ENCODE measurements at regions of chr18 and their contacts with region 1.

Region 1: DNA sequence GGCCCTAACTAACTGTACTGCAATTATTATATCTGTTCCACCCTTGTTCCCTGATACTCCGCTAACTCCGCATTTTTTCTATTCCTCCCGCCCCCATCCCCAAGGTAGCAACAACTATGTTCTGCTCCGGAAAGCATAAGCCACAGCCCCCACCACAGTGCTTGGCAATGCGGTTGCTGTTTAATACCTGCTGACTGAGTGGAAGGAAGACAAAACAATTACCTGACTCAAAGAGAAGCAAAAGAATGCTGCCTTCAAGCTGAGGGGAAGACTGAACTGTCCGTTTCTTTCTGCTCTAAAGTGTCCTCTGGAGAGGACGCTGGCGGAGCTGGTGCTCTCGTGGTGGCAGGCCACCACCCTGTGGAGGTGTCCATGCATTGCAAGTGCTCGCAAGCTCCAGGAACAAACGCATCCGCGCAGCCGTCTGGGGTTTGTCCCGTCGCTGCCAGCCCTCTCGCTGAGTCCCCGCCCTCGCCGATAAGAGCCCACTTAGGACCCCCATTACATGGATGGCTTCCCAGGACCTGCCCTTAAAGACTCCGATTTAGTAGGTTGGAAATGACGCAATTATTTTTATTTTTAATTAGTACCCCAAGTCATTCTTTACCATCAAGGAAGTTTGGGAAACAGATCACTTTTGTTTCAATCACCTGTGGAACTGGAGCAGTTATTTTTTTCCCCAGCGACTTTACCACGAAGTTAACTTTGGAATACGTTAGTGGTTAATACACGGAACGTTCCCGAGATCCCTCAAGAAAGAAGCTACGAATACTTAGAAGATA is 1.6 kb upstream of the MYL12A start:
- DNase-seq: peak; percentile 56 to 79 (median 72)
- ATAC-seq: peak; percentile 78
- H3K4me3 ChIP-seq: peak overlapping the region; percentile 97
- H3K4me3 Mint-ChIP-seq: peak overlapping the region; percentile 87 to 99 (median 97)
- H3K27ac ChIP-seq: peak overlapping the region; percentile 80
- H3K27ac Mint-ChIP-seq: peak overlapping the region; percentile 77 to 99 (median 97)
- H3K4me1 ChIP-seq: peaks cover 12 to 18% of the 10 kb centered on the region in 2 donors
- H3K4me1 Mint-ChIP-seq: peaks cover 19 to 34% (median 32%) of the 10 kb centered on the region in 7 donors
- H3K27me3 ChIP-seq: no peaks in the 10 kb centered on the region
- H3K27me3 Mint-ChIP-seq: peaks cover 0 to 2% (median 0%) of the 10 kb centered on the region in 5 donors

Region 2: GRCh38 chr18:2636126-2636631 is 609.9 kb before region 1 on chr18:
- CTCF ChIA-PET with region 1: no interaction called
- POLR2A ChIA-PET with region 1: no interaction called
- intact Hi-C with region 1: loop called in 1 of 2 experiments (anchors 5 kb)
- DNase-seq: no peak
- ATAC-seq: peak; percentile 47
- H3K4me3 ChIP-seq: peak overlapping the region; percentile 46
- H3K4me3 Mint-ChIP-seq: peak overlapping the region in 9 of 10 donors; percentile 68 to 93 (median 86)
- H3K27ac ChIP-seq: peak overlapping the region; percentile 83
- H3K27ac Mint-ChIP-seq: peak overlapping the region in 6 of 9 donors; percentile 98 to 100 (median 100)
- H3K4me1 ChIP-seq: peaks cover 65 to 74% of the 10 kb centered on the region in 2 donors
- H3K4me1 Mint-ChIP-seq: peaks cover 0 to 100% (median 79%) of the 10 kb centered on the region in 7 donors
- H3K27me3 ChIP-seq: no peaks in the 10 kb centered on the region
- H3K27me3 Mint-ChIP-seq: no peaks in the 10 kb centered on the region

Region 3: GRCh38 chr18:2958819-2959298 is 287.2 kb before region 1 on chr18:
- CTCF ChIA-PET with region 1: interaction called, 3 read pairs
- POLR2A ChIA-PET with region 1: interaction called, 26 read pairs
- intact Hi-C with region 1: loop called (anchors 1 kb)
- DNase-seq: peak in 1 of 9 donors; percentile 61
- ATAC-seq: no peak
- H3K4me3 ChIP-seq: peak overlapping the region; percentile 8
- H3K4me3 Mint-ChIP-seq: peak overlapping the region; percentile 1 to 85 (median 66)
- H3K27ac ChIP-seq: peak overlapping the region; percentile 68
- H3K27ac Mint-ChIP-seq: peak overlapping the region; percentile 96 to 100 (median 99)
- H3K4me1 ChIP-seq: peaks cover 83 to 85% of the 10 kb centered on the region in 2 donors
- H3K4me1 Mint-ChIP-seq: peaks cover 46 to 97% (median 93%) of the 10 kb centered on the region in 7 donors
- H3K27me3 ChIP-seq: no peaks in the 10 kb centered on the region
- H3K27me3 Mint-ChIP-seq: no peaks in the 10 kb centered on the region

Region 4: GRCh38 chr18:3051718-3052410 is 194.2 kb before region 1 on chr18:
- CTCF ChIA-PET with region 1: no interaction called
- POLR2A ChIA-PET with region 1: interaction called, 12 read pairs
- intact Hi-C with region 1: no loop called
- DNase-seq: no peak
- ATAC-seq: peak; percentile 38
- H3K4me3 ChIP-seq: peak overlapping the region; percentile 10
- H3K4me3 Mint-ChIP-seq: peak overlapping the region in 9 of 10 donors; percentile 0 to 76 (median 42)
- H3K27ac ChIP-seq: no peak overlapping the region
- H3K27ac Mint-ChIP-seq: peak overlapping the region; percentile 3 to 75 (median 51)
- H3K4me1 ChIP-seq: peaks cover 5 to 26% of the 10 kb centered on the region in 2 donors
- H3K4me1 Mint-ChIP-seq: peaks cover 27 to 46% (median 40%) of the 10 kb centered on the region in 7 donors
- H3K27me3 ChIP-seq: no peaks in the 10 kb centered on the region
- H3K27me3 Mint-ChIP-seq: no peaks in the 10 kb centered on the region

Region 5: GRCh38 chr18:3171631-3172030 is 74.4 kb before region 1 on chr18:
- CTCF ChIA-PET with region 1: interaction called, 8 read pairs
- POLR2A ChIA-PET with region 1: no interaction called
- intact Hi-C with region 1: loop called (anchors 5 kb)
- DNase-seq: no peak
- ATAC-seq: no peak
- H3K4me3 ChIP-seq: no peak overlapping the region
- H3K4me3 Mint-ChIP-seq: no peak overlapping the region
- H3K27ac ChIP-seq: no peak overlapping the region
- H3K27ac Mint-ChIP-seq: no peak overlapping the region
- H3K4me1 ChIP-seq: no peaks in the 10 kb centered on the region
- H3K4me1 Mint-ChIP-seq: no peaks in the 10 kb centered on the region
- H3K27me3 ChIP-seq: no peaks in the 10 kb centered on the region
- H3K27me3 Mint-ChIP-seq: peaks cover 0 to 2% (median 0%) of the 10 kb centered on the region in 5 donors

Region 6: DNA sequence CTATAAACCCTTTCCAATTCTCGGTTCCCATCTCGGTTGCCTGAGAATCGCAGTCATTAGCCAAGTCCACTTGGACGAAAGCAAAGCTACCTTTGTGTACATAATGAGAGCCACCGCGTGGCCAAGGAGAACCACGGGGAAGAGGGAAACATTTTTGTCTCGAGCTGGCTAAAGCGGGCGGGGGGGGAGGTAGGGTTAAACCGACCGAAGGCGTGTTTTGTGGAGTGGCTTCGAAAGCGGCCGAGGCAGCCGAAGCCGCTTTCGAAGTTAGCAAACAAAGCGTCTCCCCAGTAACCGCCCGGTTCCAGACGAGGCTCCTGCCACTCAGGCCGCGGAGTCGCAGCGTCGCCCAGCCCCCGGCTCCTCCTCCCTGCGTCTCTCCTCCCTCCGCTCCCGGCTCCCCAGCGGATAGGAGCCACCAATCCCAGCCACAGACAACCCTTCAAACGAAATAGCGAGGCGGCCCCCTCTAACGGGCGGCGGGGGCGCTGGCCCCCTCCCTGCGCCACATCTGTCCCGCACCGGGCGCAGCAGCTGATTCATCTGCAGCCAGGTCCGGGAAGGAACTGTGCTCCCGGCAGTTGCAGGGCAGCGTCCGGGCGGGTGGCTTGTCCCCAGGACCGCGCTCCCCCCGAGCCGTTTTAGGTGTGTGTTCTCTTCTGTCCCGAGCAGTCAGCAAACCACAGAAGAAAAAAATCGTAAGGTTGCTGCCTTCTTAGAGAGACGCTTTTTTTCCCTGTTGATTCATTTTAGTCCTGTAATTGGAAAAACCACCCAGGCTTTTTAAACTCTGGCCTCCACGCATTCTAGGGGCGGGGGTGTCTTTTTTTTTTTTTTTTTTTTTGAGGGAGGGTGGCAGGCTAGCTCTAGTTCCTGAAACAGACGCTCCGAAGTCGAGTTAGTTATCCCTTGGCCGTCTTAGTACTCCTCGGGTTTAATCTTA is 202.1 kb after region 1 on chr18:
- CTCF ChIA-PET with region 1: interaction called, 5 read pairs
- POLR2A ChIA-PET with region 1: interaction called, 49 read pairs
- intact Hi-C with region 1: loop called (anchors 1 kb)
- DNase-seq: peak; percentile 73 to 89 (median 84)
- ATAC-seq: peak; percentile 73
- H3K4me3 ChIP-seq: peak overlapping the region; percentile 78
- H3K4me3 Mint-ChIP-seq: peak overlapping the region; percentile 85 to 97 (median 96)
- H3K27ac ChIP-seq: peak overlapping the region; percentile 96
- H3K27ac Mint-ChIP-seq: peak overlapping the region; percentile 96 to 100 (median 99)
- H3K4me1 ChIP-seq: peaks cover 13% of the 10 kb centered on the region in 2 donors
- H3K4me1 Mint-ChIP-seq: peaks cover 5 to 35% (median 23%) of the 10 kb centered on the region in 7 donors
- H3K27me3 ChIP-seq: no peaks in the 10 kb centered on the region
- H3K27me3 Mint-ChIP-seq: peaks cover 0 to 1% (median 0%) of the 10 kb centered on the region in 5 donors

Measured in naive thymus-derived CD4-positive, alpha-beta T cell (primary cell).